CD4-positive, alpha-beta memory T cell (primary cell): ENCODE measurements at regions of chr7 and their contacts with region 1.

Region 1: DNA sequence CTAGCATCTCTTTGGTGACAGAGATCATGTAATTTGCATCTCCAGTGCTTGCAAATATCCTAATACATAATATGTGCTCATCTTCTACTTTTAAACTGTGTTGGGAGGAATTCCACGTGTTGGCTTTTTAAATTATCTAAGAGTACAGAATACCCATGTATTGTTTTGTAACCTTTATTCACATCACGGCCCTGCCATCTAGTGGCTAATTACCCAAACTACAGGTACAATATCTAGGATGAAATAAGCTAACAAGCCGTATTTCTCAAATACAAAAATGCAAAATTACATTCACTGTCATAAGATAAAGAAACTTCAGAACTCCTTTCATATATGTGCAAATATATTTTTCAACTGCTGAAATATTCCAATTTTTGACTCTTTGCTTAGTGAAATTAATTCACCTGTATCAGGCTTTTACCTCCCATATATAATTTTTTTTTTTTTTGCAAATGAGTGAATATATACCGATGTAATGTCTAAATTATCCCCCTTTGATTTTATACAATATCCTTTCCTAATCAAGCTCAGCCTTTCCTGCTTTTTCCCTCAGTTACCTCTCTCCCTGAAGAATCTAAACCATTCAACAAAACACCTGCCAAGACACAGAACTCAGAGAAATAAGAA is 30.3 kb upstream of the LSM8 start:
- DNase-seq: peak; percentile 18 to 40 (median 34)
- H3K4me3 ChIP-seq: no peak overlapping the region
- H3K4me3 Mint-ChIP-seq: no peak overlapping the region
- H3K27ac ChIP-seq: no peak overlapping the region
- H3K27ac Mint-ChIP-seq: no peak overlapping the region
- H3K4me1 ChIP-seq: no peaks in the 10 kb centered on the region
- H3K4me1 Mint-ChIP-seq: no peaks in the 10 kb centered on the region
- H3K27me3 ChIP-seq: no peaks in the 10 kb centered on the region
- H3K27me3 Mint-ChIP-seq: peaks cover 20% of the 10 kb centered on the region in 2 donors

Region 2: DNA sequence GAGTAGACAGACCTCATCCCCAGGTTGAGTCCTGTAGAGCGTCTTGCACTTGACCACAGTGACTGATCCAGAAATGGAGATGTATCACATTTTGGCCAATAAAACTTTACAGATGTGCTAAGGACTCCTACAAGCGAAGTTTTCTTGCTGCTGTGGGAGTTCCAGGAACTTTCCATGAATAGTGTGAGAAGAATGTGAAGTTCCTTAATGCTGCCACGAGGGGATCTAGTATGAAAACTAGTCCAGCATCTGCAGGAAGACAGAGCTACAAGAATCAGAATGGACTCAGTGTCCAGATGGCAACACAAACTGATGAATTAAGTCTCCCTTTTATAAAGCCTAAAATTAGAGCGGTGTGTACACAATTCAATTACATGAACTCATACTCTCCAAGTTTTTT is 15.5 kb after region 1 on chr7:
- CTCF ChIA-PET with region 1: interaction called, 14 read pairs
- POLR2A ChIA-PET with region 1: no interaction called
- intact Hi-C with region 1: no loop called
- DNase-seq: no peak
- H3K4me3 ChIP-seq: no peak overlapping the region
- H3K4me3 Mint-ChIP-seq: no peak overlapping the region
- H3K27ac ChIP-seq: no peak overlapping the region
- H3K27ac Mint-ChIP-seq: no peak overlapping the region
- H3K4me1 ChIP-seq: no peaks in the 10 kb centered on the region
- H3K4me1 Mint-ChIP-seq: no peaks in the 10 kb centered on the region
- H3K27me3 ChIP-seq: no peaks in the 10 kb centered on the region
- H3K27me3 Mint-ChIP-seq: peaks cover 26% of the 10 kb centered on the region in 2 donors